Activated CD4-positive, alpha-beta memory T cell treated with anti-CD3 and anti-CD28 coated beads for 36 hours (primary cell): ENCODE measurements at regions of chr14 and their contacts with region 1.

Region 1: GRCh38 chr14:23120541-23121251 is 1.6 kb upstream of the CEBPE start:
- DNase-seq: peak; percentile 90
- H3K4me3 Mint-ChIP-seq: peak overlapping the region; percentile 9
- H3K27ac Mint-ChIP-seq: peak overlapping the region; percentile 58
- H3K4me1 Mint-ChIP-seq: peaks cover 32% of the 10 kb centered on the region
- H3K27me3 Mint-ChIP-seq: no peaks in the 10 kb centered on the region

Region 2: DNA sequence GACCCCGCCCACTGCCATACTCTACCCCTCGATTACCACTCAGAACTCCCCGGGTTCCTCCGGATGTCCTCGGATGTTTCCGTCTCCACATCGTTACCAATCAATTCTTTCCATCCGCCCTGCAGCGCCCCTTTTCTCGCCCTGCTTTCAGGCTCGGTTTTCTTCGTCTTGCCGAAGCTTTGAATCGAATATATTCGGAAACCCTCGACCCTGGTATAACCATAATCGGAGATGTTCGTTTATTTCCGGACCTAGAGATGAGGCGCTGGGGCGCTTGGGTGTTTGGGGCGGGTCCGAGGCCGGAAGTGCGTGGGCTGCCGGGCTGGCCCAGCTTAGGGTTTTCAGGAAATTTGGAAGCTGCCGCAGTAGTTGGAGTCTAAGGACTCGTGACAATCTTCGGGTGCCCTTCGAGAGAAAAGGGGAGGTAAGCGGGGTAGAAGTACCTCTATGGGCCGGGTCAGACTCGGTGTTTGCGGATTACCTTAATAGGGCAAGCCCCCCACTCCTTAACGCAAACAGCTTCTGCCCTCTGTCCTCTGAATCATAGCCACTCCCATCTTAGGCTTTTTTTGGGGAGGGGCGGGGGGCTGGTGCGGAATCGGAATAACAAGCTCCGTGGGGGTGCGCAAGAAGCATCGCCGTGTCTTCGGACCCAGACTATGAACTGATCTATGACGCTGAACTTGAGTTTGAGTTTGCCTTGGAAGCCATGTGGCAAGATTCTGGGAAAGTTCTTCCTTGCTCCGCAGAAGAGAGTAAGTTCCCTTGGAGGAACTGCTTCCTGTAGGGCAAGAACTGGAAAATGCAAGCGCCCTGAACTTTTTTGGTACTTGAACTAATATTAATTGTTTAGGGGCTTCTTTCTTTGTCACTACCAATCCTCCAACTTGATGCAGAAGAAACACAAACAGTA is 25.2 kb before region 1 on chr14 and contains the start of gene C14orf119:
- CTCF ChIA-PET with region 1: interaction called, 40 read pairs
- POLR2A ChIA-PET with region 1: interaction called, 8 read pairs
- intact Hi-C with region 1: no loop called
- DNase-seq: peak; percentile 100
- H3K4me3 Mint-ChIP-seq: no peak within 1 kb of the TSS
- H3K27ac Mint-ChIP-seq: no peak within 1 kb of the TSS
- H3K4me1 Mint-ChIP-seq: peaks cover 40% of the 10 kb centered on the region
- H3K27me3 Mint-ChIP-seq: no peaks in the 10 kb centered on the region
- total RNA-seq, gene C14orf119: 58.0 to 62.8 TPM

Region 3: DNA sequence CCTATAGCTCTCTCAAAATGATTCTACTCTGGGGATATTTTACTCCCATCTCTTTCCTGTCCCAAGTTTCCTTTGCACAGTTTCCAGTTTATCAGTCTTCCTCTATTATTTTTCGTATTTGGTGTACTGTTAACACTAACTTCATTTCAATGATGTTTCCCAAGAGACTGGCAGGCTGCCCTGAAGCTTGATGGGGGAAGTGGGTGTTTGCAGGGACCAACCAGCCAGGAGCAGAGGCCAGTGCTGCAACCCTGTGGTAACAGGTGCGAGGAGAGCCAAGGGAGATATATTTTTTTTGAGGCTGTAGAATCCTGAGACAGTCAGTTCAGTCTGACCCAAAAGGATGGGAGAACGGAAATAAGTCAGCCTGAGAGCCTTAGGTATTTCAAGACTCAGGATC is 10.2 kb after region 1 on chr14:
- CTCF ChIA-PET with region 1: interaction called, 35 read pairs
- POLR2A ChIA-PET with region 1: no interaction called
- intact Hi-C with region 1: no loop called
- DNase-seq: no peak
- H3K4me3 Mint-ChIP-seq: no peak overlapping the region
- H3K27ac Mint-ChIP-seq: no peak overlapping the region
- H3K4me1 Mint-ChIP-seq: peaks cover 7% of the 10 kb centered on the region
- H3K27me3 Mint-ChIP-seq: peaks cover 3% of the 10 kb centered on the region

Region 4: GRCh38 chr14:23174276-23175184 is 53.8 kb after region 1 on chr14:
- CTCF ChIA-PET with region 1: interaction called, 47 read pairs
- POLR2A ChIA-PET with region 1: no interaction called
- intact Hi-C with region 1: no loop called
- DNase-seq: no peak
- H3K4me3 Mint-ChIP-seq: no peak overlapping the region
- H3K27ac Mint-ChIP-seq: no peak overlapping the region
- H3K4me1 Mint-ChIP-seq: peaks cover 6% of the 10 kb centered on the region
- H3K27me3 Mint-ChIP-seq: peaks cover 10% of the 10 kb centered on the region

Region 5: DNA sequence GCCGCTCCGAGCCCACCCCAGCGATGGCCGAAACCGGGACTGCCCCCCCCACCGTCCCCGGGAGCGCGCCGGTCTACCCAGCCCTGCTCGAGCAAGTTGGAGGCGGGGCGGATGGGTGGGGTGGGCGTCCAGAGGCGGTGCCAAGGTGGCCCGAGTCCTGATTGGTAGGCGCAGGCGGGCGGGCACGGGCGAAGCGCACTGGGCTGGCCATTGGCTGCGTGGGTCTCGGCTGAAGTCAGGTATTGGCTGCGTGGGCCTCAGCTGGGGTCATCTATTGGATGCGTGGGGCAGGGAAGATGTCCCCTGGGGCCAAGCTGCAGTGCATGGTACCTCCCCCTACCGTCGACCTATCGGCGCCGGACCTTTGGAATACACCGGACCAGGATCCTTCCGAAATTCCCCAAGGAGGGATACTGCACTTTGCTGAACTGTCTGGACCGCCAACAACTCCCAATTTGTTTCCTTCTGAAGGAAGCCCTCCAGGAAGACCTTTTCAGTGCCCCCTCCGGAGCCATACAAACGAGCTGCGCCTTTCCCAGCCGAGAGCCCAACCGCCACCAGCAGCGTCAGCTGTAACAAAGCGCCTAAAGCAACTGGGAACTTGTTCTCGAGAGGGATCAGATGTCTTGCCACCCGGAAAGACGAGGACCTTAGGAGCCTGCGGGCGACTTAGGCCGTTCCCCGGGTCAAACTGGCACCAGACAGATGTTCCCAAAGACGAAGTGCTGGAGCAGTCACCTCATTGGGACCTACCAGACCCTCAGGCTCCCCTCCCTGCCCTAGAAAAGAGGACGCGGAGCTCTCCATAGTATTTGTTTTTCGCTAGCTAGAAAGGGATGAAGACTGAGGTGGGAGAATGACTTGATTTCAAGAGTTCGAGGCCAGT is 165.6 kb after region 1 on chr14 and contains the start of gene HOMEZ:
- CTCF ChIA-PET with region 1: interaction called, 16 read pairs
- POLR2A ChIA-PET with region 1: no interaction called
- intact Hi-C with region 1: no loop called
- DNase-seq: peak; percentile 99
- H3K4me3 Mint-ChIP-seq: peak within 1 kb of the TSS; percentile 89
- H3K27ac Mint-ChIP-seq: peak within 1 kb of the TSS; percentile 87
- H3K4me1 Mint-ChIP-seq: peaks cover 25% of the 10 kb centered on the region
- H3K27me3 Mint-ChIP-seq: no peaks in the 10 kb centered on the region
- total RNA-seq, gene HOMEZ: 12.3 to 13.0 TPM

Region 6: DNA sequence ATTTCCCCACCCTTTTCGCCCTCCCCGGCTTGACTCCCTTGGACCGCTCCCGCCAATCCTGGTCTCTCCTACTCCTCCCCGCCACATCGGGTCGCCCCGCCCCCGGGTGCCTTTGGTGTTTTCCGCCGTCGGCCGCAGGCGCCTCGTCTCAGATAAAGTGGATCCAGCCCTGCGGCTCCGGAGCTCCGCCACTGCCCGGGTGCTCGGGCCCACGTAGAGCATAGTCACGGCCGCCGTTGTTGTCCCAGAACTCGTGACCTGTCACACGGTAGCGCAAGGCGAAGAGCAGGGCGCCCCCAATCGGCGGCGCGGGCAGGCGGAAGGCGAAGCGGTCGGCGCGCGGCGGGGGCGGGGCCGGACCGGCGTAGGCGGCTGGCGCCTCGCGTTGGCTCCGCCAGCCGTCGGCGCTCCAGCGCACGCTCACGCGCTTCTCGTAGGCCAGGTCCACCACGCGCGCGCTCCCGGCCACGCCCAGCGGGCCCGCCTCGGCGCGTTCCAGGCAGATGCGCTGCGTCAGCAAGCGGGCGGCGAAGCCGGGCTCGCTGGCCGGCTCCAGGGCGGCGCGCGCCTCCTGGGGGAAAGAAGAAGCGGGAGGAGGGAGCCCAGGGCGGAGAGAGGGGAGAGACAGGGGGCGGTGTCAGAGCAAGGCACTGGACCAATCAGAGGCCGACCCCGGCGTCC is 180.7 kb after region 1 on chr14:
- CTCF ChIA-PET with region 1: interaction called, 32 read pairs
- POLR2A ChIA-PET with region 1: no interaction called
- intact Hi-C with region 1: loop called (anchors 1 kb)
- DNase-seq: peak; percentile 98
- H3K4me3 Mint-ChIP-seq: peak overlapping the region; percentile 94
- H3K27ac Mint-ChIP-seq: peak overlapping the region; percentile 94
- H3K4me1 Mint-ChIP-seq: peaks cover 22% of the 10 kb centered on the region
- H3K27me3 Mint-ChIP-seq: peaks cover 5% of the 10 kb centered on the region

Region 7: GRCh38 chr14:23379366-23380196 is 258.9 kb after region 1 on chr14:
- CTCF ChIA-PET with region 1: interaction called, 14 read pairs
- POLR2A ChIA-PET with region 1: no interaction called
- intact Hi-C with region 1: no loop called
- DNase-seq: peak; percentile 73
- H3K4me3 Mint-ChIP-seq: no peak overlapping the region
- H3K27ac Mint-ChIP-seq: no peak overlapping the region
- H3K4me1 Mint-ChIP-seq: no peaks in the 10 kb centered on the region
- H3K27me3 Mint-ChIP-seq: peaks cover 7% of the 10 kb centered on the region